Dorsolateral prefrontal cortex (tissue), 120 donors: ENCODE measurements at regions of chr1 and their contacts with region 1.

Region 1: GRCh38 chr1:53196485-53197270 is at the start of gene CPT2:
- DNase-seq: peak; percentile 87 to 96 (median 94)
- H3K4me3 ChIP-seq: peak within 1 kb of the TSS; percentile 72 to 100 (median 96)
- H3K27ac ChIP-seq: peak within 1 kb of the TSS; percentile 63 to 97 (median 92)
- H3K27me3 ChIP-seq: no peaks in the 10 kb centered on the region
- CTCF ChIP-seq: peak in 52 of 56 donors; percentile 11 to 68 (median 37)
- total RNA-seq, gene CPT2: 4.3 to 20.0 (median 10.7) TPM

Region 2: DNA sequence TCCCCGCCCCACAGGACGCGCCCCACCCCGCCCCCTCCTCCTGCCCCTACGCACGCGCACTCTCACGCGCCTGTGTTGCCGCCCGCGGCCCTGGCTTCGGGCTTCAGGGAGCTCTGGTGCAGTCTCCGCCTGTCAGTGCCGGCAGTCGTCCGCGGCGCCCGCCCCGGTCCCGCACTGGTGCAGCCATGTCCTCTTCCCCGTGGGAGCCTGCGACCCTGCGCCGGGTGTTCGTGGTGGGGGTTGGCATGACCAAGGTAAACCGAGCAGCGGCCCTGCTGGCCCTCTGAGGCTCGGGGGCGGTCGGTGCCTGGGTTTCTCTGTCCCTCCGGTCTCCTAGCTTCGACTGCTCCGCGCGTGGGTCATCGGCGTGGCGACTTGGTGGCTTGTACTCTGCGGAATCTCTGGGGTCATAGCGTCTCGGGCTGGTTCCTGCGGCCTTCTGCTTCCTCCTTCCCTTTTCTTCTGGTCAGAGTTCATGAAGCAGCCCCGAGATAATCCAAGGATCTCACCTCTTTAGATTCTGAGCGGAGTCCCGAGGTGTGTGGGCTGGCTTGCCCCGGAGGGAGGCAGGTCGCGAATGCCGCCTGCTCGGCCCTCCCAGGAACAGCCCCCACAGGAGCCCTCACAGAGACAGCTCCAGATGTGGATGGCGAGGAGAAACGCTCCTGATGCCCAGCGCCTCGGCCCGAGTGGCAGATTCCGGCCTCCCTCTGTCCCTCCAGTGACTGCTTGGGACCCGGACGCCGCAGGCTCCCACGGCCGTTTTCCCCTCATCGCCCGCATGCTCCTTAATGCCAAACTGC is 269.3 kb before region 1 on chr1 and contains the start of gene SCP2:
- intact Hi-C with region 1: loop called in 1 of 2 experiments (anchors 10 kb)
- DNase-seq: peak; percentile 55 to 89 (median 72)
- H3K4me3 ChIP-seq: peak within 1 kb of the TSS; percentile 60 to 95 (median 81)
- H3K27ac ChIP-seq: peak within 1 kb of the TSS in 57 of 59 donors; percentile 14 to 92 (median 81)
- H3K27me3 ChIP-seq: peaks cover 0 to 15% (median 0%) of the 10 kb centered on the region in 45 donors
- CTCF ChIP-seq: peak in 5 of 56 donors; percentile 6 to 30 (median 8)
- total RNA-seq, gene SCP2: 53.5 to 119 (median 87.1) TPM

Region 3: DNA sequence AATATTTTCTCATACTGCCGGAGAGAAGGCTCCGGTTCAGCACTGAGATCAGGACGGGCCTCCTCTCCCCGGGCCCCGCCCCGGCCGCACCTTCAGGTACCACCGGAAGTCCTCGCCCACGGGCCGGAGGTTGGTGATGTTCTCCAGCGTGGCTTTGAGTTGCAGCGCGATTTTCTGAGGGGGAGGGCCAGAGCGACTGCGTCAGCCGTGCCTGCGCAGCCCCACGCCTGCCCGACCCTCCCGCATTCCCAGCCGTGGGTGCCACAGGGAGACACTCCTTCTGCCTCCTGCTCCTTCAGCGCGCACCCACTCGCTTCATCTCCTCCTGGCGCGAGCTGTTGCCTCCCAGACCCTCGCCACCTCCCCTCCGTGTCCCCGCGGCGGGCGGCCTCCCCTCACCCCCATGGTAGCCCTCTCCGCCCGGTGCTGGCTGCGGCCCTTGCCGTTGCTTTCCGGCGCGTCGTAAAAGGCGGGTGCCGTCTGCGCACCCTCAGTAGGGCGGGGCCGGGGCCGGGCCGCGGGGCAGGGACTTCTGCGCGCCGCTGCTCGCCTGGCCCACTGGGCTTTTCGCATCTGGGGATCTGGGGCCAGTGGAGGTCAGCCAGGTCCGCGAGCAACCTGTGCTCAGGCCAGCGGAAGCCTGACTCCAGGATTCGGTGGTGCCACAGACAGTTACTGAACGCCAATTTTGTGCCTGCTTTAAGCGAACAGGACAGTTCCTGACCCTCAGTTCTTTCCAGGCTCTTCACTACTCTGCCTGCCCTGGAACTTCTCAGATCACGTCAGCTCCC is 23.7 kb after region 1 on chr1 and contains the start of gene CZIB:
- intact Hi-C with region 1: loop called in 1 of 2 experiments (anchors 2 kb)
- DNase-seq: peak; percentile 80 to 97 (median 90)
- H3K4me3 ChIP-seq: peak within 1 kb of the TSS; percentile 67 to 99 (median 89)
- H3K27ac ChIP-seq: peak within 1 kb of the TSS; percentile 65 to 99 (median 96)
- H3K27me3 ChIP-seq: no peaks in the 10 kb centered on the region
- CTCF ChIP-seq: peak in 21 of 56 donors; percentile 5 to 40 (median 19)
- total RNA-seq, gene CZIB: 49.0 to 99.7 (median 72.4) TPM

Region 4: DNA sequence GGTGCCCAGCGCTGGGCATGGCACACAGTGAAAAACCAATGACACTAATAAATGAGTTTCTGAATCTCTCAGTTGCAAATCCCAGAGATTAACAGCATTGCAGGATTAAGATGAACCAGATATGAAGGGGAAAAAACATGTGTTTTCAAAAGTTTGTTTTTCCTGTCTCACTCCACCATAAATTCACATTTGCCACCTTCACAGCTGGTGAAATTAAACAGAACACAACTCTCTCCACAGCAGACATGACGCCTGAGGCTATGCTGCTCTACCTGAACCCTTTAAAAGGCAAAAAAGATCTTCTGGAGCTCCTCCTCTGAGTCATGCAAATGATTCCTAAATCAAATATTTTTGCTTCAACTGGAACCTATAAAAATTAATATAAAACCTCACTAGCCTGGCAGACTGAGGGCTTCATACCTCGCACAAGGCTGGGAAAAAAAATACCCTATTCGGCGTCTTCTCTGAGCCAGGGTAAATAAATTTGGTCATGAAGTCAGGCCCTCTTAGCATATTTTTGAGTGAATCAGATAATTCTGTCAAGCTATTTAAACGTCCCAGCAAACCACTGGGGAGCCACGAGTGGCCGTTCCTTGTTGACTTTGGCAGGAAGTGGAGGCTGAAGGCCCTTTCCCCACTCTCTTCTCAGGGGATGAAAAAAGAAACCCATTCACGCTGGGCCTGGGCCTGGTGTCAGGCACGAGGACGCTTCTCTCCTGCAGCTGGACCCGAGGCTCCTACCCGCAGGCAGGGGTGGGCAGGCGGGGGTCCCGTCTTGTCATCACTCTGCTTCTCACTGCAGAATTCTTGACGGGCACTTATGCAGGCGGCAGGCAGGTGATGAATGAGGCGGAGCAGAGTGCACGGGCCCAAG is 315.5 kb after region 1 on chr1:
- intact Hi-C with region 1: no loop called
- DNase-seq: no peak
- H3K4me3 ChIP-seq: no peak overlapping the region
- H3K27ac ChIP-seq: no peak overlapping the region
- H3K27me3 ChIP-seq: no peaks in the 10 kb centered on the region
- CTCF ChIP-seq: no peak